ENCODE measurements at regions of chr4 and their contacts with region 1.

Region 1: DNA sequence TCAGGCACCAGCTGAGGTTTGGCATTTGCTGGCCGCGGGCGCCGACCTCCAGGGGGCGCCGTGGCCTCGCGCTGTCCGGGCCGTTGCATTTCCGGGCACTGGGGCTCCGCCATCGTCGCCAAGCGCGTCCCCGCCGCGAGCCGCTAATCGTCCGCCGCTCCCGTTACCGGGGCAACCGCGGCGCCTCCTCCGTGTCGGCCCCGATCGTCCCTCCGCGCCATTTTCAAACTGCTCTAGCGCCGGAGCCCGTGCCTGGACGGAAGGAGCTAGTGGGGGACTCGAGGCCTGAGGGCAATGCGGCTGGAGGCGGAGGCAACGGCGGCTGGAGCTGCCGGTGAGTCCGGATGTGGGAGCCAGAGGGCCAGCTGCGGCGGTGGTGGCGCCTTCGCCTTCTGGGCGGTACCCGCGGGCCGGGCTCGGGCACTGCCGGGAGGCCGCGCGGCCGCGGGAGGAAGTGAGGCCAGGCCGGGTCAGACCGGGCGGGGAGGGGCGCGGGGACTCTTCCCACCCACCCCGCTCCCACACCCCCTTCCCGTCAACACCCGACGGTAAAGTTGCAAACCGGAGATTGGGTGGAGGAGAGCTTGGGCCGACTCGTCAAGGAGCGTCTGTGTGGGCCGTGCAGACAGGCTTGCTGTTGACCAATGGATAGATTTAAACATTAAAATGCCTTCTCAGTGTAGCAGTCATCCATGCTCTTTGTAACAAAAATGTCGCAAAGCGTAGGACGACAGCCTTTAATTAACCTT is at the start of gene CEP135:
- DNase-seq: peak; percentile 73 to 88
- H3K4me3 ChIP-seq: peak within 1 kb of the TSS; percentile 77
- H3K27ac ChIP-seq: peak within 1 kb of the TSS; percentile 94
- H3K4me1 ChIP-seq: peaks cover 21% of the 10 kb centered on the region
- H3K27me3 ChIP-seq: no peaks in the 10 kb centered on the region
- CTCF ChIP-seq: peak; percentile 76
- total RNA-seq, gene CEP135: 7.3 and 8.8 TPM in 2 replicates

Region 2: GRCh38 chr4:55896622-55897021 is 52.3 kb before region 1 on chr4:
- CTCF ChIA-PET with region 1: no interaction called
- POLR2A ChIA-PET with region 1: no interaction called
- intact Hi-C with region 1: loop called (anchors 1 kb)
- DNase-seq: no peak
- H3K4me3 ChIP-seq: no peak overlapping the region
- H3K27ac ChIP-seq: no peak overlapping the region
- H3K4me1 ChIP-seq: no peaks in the 10 kb centered on the region
- H3K27me3 ChIP-seq: no peaks in the 10 kb centered on the region
- CTCF ChIP-seq: no peak

Region 3: GRCh38 chr4:55973650-55974049 is 24.8 kb after region 1 on chr4:
- CTCF ChIA-PET with region 1: no interaction called
- POLR2A ChIA-PET with region 1: no interaction called
- intact Hi-C with region 1: loop called (anchors 1 kb)
- DNase-seq: no peak
- H3K4me3 ChIP-seq: no peak overlapping the region
- H3K27ac ChIP-seq: no peak overlapping the region
- H3K4me1 ChIP-seq: no peaks in the 10 kb centered on the region
- H3K27me3 ChIP-seq: no peaks in the 10 kb centered on the region
- CTCF ChIP-seq: no peak

Region 4: DNA sequence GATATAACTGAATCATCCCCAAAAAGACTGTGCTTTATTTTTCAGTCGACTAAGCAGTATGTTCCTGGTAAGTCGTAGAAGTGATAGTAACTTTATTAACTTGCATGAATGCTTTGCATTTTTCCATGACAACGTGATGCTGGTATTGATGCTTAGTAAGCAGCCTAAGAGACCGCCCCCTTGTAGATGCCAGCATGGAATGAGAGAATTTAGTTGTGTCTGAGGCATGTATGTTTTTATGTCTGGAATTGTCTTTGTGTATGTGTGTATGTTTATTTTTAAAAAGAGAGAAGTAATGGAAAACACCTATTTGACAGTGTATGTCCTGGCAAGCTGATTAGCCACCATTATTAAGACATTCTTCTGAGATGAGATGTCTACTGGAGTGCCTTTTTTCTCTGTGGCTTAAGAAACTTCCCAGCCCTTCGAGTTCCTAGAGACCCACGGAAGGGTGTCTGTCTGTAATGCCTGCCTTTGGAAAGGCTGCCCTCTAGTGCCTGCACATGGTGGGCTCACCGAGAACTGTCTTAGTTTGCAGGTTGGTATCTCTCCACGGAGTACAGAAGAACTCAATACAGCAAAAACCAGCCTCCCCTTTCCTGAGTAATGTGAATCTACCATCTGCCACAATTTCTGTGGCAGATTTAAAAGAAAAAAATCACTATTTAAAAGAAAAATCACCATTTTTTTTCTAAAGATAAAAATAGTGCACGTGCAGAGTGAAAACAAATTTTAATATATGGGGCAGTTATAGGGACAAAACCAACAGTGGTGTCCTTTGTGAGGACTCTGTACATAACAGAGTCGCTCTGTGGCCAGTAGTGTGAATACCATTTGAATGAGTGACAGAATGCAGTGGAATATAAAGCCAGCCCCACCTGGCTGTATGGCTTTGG is 352.5 kb after region 1 on chr4:
- CTCF ChIA-PET with region 1: no interaction called
- POLR2A ChIA-PET with region 1: no interaction called
- intact Hi-C with region 1: loop called (anchors 1 kb)
- DNase-seq: peak; percentile 53 to 65
- H3K4me3 ChIP-seq: no peak overlapping the region
- H3K27ac ChIP-seq: no peak overlapping the region
- H3K4me1 ChIP-seq: no peaks in the 10 kb centered on the region
- H3K27me3 ChIP-seq: no peaks in the 10 kb centered on the region
- CTCF ChIP-seq: peak; percentile 82